ENCODE measurements at regions of chr6 and their contacts with region 1.

Region 1: GRCh38 chr6:108558372-108559096 is 2.2 kb upstream of the FOXO3 start:
- DNase-seq: peak; percentile 98
- ATAC-seq: peak; percentile 71 to 85 (median 80)
- H3K4me3 ChIP-seq: peak overlapping the region; percentile 70 to 97 (median 93)
- H3K27ac ChIP-seq: peak overlapping the region; percentile 96 to 100 (median 99)
- H3K4me1 ChIP-seq: peaks cover 0 to 47% (median 32%) of the 10 kb centered on the region in 9 donors
- H3K27me3 ChIP-seq: no peaks in the 10 kb centered on the region
- CTCF ChIP-seq: no peak

Region 2: DNA sequence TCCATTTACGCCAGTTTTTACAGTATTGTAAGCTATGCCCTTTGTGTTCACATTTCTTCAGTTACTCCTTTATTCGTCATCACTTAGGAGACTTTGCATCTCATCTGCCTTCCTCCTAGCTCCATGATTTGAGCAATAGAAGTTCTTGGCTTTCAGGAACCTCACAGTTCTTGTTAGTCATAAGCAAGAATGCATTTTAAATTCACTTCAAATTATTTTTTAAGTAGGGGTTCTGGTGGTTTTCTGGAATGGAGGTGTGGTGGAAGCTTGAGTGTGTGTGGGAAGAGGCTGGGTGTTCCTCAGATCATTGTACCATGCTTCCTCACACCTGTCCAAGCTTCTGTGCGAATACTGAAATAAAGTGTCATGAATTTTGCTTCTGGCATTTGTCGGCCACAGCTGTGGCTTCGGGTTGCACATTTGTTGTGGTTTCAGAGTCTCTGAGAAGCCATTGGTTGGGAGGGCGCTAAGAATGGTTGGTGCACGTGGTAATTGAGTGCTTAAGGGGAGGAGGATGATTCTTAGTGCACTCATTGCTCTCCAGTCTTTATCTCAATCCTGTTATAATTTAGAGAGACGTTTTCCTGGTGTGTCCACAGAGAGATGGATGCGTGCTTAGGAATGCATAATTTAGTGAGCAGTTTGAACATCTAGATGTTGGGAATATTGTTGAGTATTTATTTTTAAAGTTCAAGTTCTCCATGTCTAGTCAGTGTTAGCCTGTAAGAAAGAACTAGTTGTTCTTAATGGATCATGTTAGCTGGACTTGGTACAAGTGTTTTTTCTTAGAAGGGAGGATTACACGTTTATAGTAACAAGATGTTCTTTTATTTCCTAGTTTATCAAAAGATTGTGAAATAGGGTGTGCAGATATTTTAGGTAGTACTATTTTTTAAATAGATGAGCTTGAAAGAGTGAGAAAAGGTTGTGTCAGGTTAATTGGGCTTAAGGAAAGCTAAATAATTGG is 34.1 kb after region 1 on chr6:
- intact Hi-C with region 1: loop called in 1 of 10 experiments (anchors 2 kb)
- DNase-seq: no peak
- ATAC-seq: peak; percentile 20 to 59 (median 33)
- H3K4me3 ChIP-seq: no peak overlapping the region
- H3K27ac ChIP-seq: peak overlapping the region in 9 of 10 donors; percentile 46 to 85 (median 76)
- H3K4me1 ChIP-seq: peaks cover 68 to 100% (median 100%) of the 10 kb centered on the region in 9 donors
- H3K27me3 ChIP-seq: no peaks in the 10 kb centered on the region
- CTCF ChIP-seq: no peak

Region 3: GRCh38 chr6:108655806-108656651 is 97.5 kb after region 1 on chr6:
- intact Hi-C with region 1: loop called in 7 of 10 experiments (anchors 2 to 10 kb)
- DNase-seq: peak in 1 of 2 donors; percentile 38
- ATAC-seq: peak in 7 of 8 donors; percentile 29 to 57 (median 52)
- H3K4me3 ChIP-seq: peak overlapping the region in 4 of 10 donors; percentile 5 to 13 (median 9)
- H3K27ac ChIP-seq: peak overlapping the region; percentile 57 to 90 (median 84)
- H3K4me1 ChIP-seq: peaks cover 28 to 100% (median 83%) of the 10 kb centered on the region in 9 donors
- H3K27me3 ChIP-seq: no peaks in the 10 kb centered on the region
- CTCF ChIP-seq: no peak

Region 4: GRCh38 chr6:108782179-108783041 is 223.9 kb after region 1 on chr6:
- intact Hi-C with region 1: loop called in 9 of 10 experiments (anchors 1 to 5 kb)
- DNase-seq: peak; percentile 82
- ATAC-seq: peak; percentile 89 to 96 (median 93)
- H3K4me3 ChIP-seq: peak overlapping the region in 9 of 10 donors; percentile 31 to 64 (median 55)
- H3K27ac ChIP-seq: peak overlapping the region in 5 of 10 donors; percentile 5 to 42 (median 33)
- H3K4me1 ChIP-seq: peaks cover 0 to 21% (median 7%) of the 10 kb centered on the region in 9 donors
- H3K27me3 ChIP-seq: no peaks in the 10 kb centered on the region
- CTCF ChIP-seq: peak; percentile 41 to 93 (median 82)

Region 5: GRCh38 chr6:109079981-109080380 is 521.4 kb after region 1 on chr6:
- intact Hi-C with region 1: loop called in 1 of 10 experiments (anchors 5 kb)
- DNase-seq: peak in 1 of 2 donors; percentile 81
- ATAC-seq: peak; percentile 74 to 94 (median 91)
- H3K4me3 ChIP-seq: peak overlapping the region in 2 of 10 donors; percentile 2 to 5
- H3K27ac ChIP-seq: peak overlapping the region; percentile 21 to 86 (median 75)
- H3K4me1 ChIP-seq: peaks cover 0 to 89% (median 54%) of the 10 kb centered on the region in 9 donors
- H3K27me3 ChIP-seq: no peaks in the 10 kb centered on the region
- CTCF ChIP-seq: no peak